Spleen (tissue), 13 donors: ENCODE measurements at regions of chr5 and their contacts with region 1.

Region 1: GRCh38 chr5:139787568-139788293 is 7.9 kb upstream of the PSD2 start:
- DNase-seq: peak; percentile 94
- H3K4me3 ChIP-seq: peak overlapping the region; percentile 32 to 74 (median 62)
- H3K27ac ChIP-seq: peak overlapping the region in 4 of 8 donors; percentile 25 to 54 (median 36)
- H3K4me1 ChIP-seq: peaks cover 3 to 16% (median 12%) of the 10 kb centered on the region in 6 donors
- H3K27me3 ChIP-seq: peaks cover 0 to 40% (median 0%) of the 10 kb centered on the region in 7 donors
- CTCF ChIP-seq: peak; percentile 89 to 98 (median 96)
- POLR2A ChIP-seq: no peak

Region 2: DNA sequence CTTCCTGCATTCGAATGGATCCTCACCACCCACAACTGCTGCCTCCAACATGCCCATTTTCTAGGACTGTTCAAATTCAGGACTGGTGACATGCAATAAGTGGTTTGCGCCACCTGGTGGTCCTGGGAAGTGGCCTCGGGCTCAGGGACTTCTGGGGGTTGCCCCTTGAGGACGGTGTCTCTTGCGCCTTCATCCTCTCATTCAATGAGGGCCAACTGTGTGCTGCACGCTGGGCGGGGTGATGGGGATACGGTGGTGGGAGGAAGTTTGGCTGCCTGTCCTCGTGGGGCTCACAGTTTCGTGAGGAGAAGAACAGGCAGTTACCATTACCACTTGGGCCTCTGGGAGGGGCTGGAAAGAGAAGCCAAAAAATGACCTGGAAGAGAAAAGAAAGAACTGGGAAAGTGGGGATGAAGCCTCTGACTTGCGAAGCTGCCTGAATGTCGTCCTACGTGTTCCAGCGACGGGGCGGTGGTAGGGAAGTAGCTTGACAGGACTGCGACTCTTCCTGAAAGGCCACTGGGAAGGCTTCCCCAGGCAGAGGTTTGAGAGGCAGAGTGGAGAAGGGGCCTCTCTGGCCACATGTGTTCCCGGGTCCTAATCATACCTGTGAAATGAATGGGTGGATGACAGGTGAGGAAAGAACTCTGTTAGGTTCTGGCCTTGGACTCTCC is 56.9 kb after region 1 on chr5:
- intact Hi-C with region 1: loop called (anchors 5 kb)
- DNase-seq: peak; percentile 90
- H3K4me3 ChIP-seq: no peak overlapping the region
- H3K27ac ChIP-seq: no peak overlapping the region
- H3K4me1 ChIP-seq: peaks cover 0 to 38% (median 20%) of the 10 kb centered on the region in 6 donors
- H3K27me3 ChIP-seq: peaks cover 0 to 34% (median 0%) of the 10 kb centered on the region in 7 donors
- CTCF ChIP-seq: peak; percentile 59 to 85 (median 73)
- POLR2A ChIP-seq: no peak

Region 3: GRCh38 chr5:139863855-139864558 is 76.3 kb after region 1 on chr5:
- intact Hi-C with region 1: loop called (anchors 5 kb)
- DNase-seq: no peak
- H3K4me3 ChIP-seq: no peak overlapping the region
- H3K27ac ChIP-seq: peak overlapping the region in 6 of 8 donors; percentile 3 to 44 (median 30)
- H3K4me1 ChIP-seq: peaks cover 0 to 30% (median 7%) of the 10 kb centered on the region in 6 donors
- H3K27me3 ChIP-seq: no peaks in the 10 kb centered on the region
- CTCF ChIP-seq: peak; percentile 70 to 91 (median 84)
- POLR2A ChIP-seq: no peak

Region 4: DNA sequence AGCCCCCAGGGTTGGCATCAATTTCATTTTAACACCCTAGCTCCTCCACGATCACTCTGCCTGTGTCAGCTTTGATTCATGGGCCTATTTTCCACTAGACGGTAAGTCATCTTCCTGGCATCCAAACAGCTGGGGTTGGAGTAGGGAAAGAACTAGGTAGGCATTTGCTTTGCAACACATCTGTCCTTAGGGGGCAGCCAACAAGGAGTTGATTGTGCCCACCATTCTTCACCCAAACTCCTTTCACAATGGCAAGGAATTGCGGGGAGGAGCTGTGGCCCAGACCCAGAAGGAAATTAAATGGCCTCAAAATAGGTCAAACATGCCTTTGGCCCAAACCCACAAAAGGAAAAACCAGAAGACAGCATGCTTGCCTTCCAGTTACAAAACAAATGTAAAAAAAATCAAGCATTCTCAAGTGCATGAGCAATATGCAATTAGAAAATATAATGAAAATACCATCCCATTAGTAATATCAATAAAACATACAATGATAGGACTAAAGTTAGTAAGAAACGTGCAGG is 183.5 kb after region 1 on chr5:
- intact Hi-C with region 1: loop called (anchors 2 kb)
- DNase-seq: no peak
- H3K4me3 ChIP-seq: no peak overlapping the region
- H3K27ac ChIP-seq: no peak overlapping the region
- H3K4me1 ChIP-seq: peaks cover 7 to 19% (median 10%) of the 10 kb centered on the region in 6 donors
- H3K27me3 ChIP-seq: peaks cover 0 to 16% (median 0%) of the 10 kb centered on the region in 7 donors
- CTCF ChIP-seq: no peak
- POLR2A ChIP-seq: no peak

Region 5: DNA sequence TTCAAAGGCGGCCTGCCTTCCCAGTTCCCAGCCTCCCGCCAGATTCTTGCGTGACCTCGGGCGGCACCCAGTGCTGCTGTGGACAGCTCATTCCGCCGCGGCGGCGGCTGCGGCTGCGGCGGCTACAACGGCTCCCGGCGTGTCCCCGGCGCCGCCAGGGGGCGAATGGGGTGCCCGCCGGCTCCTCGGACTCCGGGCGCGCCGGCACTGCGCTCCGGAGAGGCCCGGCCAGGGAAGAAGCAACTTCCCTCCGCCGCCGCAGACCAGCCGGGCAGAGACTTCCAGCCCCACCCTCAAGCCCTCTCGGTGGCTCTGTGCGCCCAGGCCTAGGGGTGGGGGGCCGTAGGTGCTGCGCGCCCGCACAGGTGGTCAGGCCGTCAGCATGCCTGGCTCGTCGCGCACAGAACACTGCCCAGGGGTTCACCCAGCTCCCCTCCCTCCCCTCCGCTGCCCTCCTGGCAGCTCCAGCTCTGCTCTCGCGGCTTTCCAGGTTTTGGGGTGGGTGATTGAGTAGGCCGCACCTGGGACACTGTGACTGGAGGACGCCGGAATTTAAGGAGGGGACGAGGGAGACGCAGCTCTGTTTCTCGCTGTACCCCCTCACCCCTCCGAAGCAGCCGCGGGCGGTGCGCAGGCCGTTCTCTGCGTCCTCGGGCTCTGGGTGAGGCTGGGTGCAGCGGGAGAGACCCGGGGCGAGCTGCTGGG is 358.2 kb after region 1 on chr5:
- intact Hi-C with region 1: loop called (anchors 5 kb)
- DNase-seq: peak; percentile 92
- H3K4me3 ChIP-seq: peak overlapping the region; percentile 16 to 67 (median 30)
- H3K27ac ChIP-seq: no peak overlapping the region
- H3K4me1 ChIP-seq: peaks cover 10 to 41% (median 24%) of the 10 kb centered on the region in 6 donors
- H3K27me3 ChIP-seq: peaks cover 0 to 23% (median 8%) of the 10 kb centered on the region in 7 donors
- CTCF ChIP-seq: peak in 10 of 11 experiments; percentile 31 to 90 (median 82)
- POLR2A ChIP-seq: no peak